Activated CD4-positive, alpha-beta T cell treated with anti-CD3 and anti-CD28 coated beads, Interleukin-2, amount 10 ng/mL, durations not matched to agents 24 days and 14 days (primary cell): ENCODE measurements at regions of chr11 and their contacts with region 1.

Region 1: DNA sequence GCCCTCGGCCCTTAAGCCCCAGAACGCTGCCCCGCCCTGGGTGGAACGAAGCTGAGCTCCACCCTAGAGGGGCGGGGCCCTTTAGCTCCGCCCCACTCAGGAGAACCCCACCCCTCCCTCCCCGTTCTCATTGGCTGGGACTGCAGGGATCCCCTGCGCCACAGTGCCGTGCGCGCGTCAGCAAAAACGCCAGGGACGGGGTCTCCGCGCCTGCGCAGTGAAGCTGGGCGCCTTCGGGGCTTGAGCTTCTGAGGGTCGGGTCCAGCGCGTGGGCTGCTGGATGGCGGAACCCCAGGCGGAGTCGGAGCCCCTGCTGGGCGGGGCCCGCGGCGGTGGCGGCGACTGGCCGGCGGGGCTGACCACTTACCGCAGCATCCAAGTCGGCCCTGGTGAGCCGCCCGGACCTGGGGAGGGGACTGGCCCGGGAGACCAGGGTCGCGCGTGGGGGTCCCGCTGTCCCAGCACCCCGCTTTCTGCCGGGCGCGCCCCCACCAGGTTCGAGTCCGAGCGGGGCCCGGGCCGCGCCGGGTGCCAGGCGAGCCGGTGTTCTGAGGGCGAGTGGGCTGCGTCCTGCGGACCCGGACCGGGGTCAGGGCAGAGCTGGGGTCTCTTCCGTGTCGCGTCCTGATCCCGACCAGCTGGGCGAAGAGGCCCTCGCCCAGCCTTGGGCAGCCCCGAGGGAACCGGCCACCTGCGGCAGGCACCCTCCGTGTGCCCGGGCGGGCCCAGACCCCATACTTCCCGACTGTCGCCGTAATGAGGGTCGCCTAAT is at the start of gene TPCN2:
- DNase-seq: peak; percentile 98
- H3K4me3 Mint-ChIP-seq: peak within 1 kb of the TSS; percentile 84
- H3K27ac Mint-ChIP-seq: peak within 1 kb of the TSS; percentile 84
- H3K4me1 Mint-ChIP-seq: peaks cover 20% of the 10 kb centered on the region
- H3K27me3 Mint-ChIP-seq: peaks cover 14% of the 10 kb centered on the region
- total RNA-seq, gene TPCN2: 15.7 and 16.8 TPM in 2 replicates

Region 2: DNA sequence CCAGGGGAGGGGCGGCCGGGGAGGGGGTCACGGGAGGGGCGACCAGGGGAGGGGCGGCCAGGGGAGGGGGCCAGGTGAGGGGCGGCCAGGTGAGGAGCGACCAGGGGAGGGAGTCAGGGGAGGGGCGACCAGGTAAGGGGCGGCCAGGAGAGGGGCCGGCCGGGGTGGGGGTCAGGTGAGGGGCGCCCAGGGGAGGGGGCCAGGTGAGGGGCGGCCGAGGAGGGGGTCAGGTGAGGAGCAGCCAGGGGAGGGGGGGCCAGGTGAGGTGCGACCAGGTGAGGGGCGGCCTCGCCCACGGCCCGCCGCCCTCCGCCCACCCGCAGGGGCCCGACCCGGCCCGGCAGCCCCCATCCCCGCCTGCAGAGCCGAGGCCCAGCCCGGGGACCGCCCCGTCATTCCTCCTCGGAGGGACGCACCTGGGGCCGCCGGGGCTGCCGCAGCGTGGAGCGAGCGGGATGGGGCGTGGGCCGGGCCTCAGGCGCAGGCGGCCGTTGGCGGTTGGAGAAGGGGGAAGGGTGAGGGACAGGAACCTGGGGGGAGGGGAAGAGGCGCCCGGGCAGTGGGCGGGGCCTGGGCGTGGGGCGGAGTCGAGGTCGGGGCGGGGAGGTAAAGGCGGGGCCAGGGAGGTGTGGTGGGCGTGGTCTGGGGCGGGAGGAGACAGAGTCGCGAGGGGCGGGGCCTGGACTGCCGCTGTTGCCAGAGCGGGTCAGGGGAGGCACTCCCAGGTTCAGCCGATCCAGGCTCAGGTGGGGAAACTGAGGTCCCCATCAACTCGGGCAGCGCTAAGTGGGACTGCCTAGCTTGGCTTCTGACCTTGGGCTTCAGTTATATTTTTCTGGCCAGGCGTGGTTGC is 297.7 kb before region 1 on chr11 and contains the start of gene TESMIN:
- intact Hi-C with region 1: loop called (anchors 1 kb)
- DNase-seq: peak; percentile 96
- H3K4me3 Mint-ChIP-seq: peak within 1 kb of the TSS; percentile 85
- H3K27ac Mint-ChIP-seq: peak within 1 kb of the TSS; percentile 62
- H3K4me1 Mint-ChIP-seq: peaks cover 5% of the 10 kb centered on the region
- H3K27me3 Mint-ChIP-seq: peaks cover 3% of the 10 kb centered on the region
- total RNA-seq, gene TESMIN: 1.4 and 1.6 TPM in 2 replicates

Region 3: GRCh38 chr11:68903288-68904247 is 145.3 kb before region 1 on chr11 and contains the starts of genes IGHMBP2 and MRPL21:
- intact Hi-C with region 1: loop called (anchors 5 kb)
- DNase-seq: peak; percentile 97
- H3K4me3 Mint-ChIP-seq: peak within 1 kb of the TSS; percentile 99
- H3K27ac Mint-ChIP-seq: peak within 1 kb of the TSS; percentile 94
- H3K4me1 Mint-ChIP-seq: peaks cover 26% of the 10 kb centered on the region
- H3K27me3 Mint-ChIP-seq: no peaks in the 10 kb centered on the region
- total RNA-seq, gene IGHMBP2: 39.2 and 39.8 TPM in 2 replicates
- total RNA-seq, gene MRPL21: 120 and 128 TPM in 2 replicates

Region 4: DNA sequence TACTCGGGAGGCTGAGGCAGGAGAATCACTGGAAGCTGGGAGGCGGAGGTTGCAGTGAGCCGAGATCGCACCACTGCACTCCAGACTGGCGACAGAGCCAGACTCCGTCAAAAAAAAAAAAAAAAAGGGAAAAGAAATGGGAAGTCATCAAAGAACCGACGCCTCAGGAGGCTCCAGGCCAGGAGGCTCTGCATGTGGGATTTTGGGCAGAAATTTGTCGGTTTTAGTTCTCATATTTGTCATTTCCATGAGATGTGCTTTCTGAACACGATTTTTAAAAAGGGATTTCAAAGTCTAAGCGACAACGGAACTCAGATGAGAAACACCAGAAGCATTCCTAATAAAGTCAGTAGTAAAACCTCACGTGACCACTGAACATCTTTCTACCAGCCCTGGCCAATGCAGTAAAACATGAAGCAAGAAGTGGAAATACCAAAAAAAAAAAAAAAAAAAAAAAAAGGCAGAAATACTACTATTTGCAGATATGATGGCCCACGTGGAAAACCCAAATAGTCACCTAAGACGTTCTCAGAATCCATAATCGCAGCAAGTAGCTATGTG is 627.0 kb after region 1 on chr11:
- intact Hi-C with region 1: loop called (anchors 1 kb)
- DNase-seq: no peak
- H3K4me3 Mint-ChIP-seq: peak overlapping the region; percentile 96
- H3K27ac Mint-ChIP-seq: peak overlapping the region; percentile 92
- H3K4me1 Mint-ChIP-seq: peaks cover 17% of the 10 kb centered on the region
- H3K27me3 Mint-ChIP-seq: peaks cover 8% of the 10 kb centered on the region